ENCODE measurements at regions of chr9 and their contacts with region 1.

Region 1: DNA sequence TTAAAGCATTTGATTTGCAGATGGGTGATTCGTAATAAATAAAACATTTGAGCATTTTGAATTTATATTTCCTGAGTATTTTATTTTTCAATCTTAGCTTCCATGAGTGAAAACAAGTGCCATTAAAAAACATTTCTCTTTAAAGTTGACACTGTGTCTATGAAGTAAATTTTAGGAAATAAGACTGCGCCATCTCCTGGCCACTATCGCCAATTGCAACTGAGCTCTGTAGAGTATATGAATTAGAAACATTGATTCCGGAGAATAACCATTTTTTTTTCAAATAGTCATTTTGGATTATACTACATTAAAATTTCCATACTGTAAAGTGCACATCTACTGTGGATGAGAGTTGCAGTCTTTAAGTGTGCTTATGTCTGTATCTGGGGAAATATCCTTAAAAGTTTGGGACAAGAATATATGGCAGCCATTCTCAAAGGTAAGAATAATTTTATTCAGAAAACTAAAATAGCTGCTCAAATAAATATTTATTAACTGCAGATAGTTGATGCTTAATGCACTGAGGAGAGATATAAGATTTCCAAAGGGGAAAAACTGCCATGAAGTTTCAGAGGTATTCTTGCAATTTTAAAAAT is 5.9 kb downstream of the DMRTA1 start:
- DNase-seq: peak; percentile 60
- H3K4me3 Mint-ChIP-seq: no peak overlapping the region
- H3K27ac Mint-ChIP-seq: no peak overlapping the region
- H3K4me1 Mint-ChIP-seq: peaks cover 6% of the 10 kb centered on the region
- H3K27me3 Mint-ChIP-seq: peaks cover 26% of the 10 kb centered on the region

Region 2: GRCh38 chr9:22216730-22217160 is 235.8 kb before region 1 on chr9:
- CTCF ChIA-PET with region 1: no interaction called
- POLR2A ChIA-PET with region 1: no interaction called
- intact Hi-C with region 1: no loop called
- DNase-seq: no peak
- H3K4me3 Mint-ChIP-seq: no peak overlapping the region
- H3K27ac Mint-ChIP-seq: no peak overlapping the region
- H3K4me1 Mint-ChIP-seq: peaks cover 11% of the 10 kb centered on the region
- H3K27me3 Mint-ChIP-seq: no peaks in the 10 kb centered on the region

Region 3: DNA sequence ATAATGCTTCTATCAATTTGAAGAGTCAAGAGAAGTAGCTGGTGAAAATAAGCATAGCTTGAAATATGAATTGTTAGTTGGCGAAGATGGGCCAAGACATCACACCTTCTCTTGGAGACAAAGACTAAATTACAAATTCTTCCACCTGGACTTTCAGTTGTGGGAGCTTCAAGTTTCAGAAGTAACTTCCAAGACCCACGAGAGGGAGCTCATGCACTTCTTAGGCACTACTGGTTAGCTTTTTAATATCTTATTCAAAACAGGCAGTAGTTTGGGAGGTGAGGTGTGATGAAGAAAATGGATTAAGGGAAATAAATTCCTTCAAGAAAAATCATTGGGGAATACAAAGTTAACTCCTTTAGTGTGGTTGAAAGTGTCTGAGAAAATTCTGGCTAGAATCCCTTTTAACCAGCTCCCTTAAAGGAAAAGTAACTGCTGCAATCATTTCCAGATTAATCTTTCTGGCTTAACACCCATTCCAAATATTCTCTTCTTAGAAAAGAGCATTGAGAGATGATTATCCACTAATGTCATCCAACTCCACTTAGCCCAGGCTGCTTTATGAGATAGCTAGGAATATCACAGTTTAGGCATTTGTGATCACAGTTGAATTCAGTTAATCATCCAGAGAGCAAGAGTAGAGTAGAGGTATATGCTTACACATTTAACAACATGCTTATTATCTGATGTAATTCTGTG is 145.4 kb before region 1 on chr9:
- CTCF ChIA-PET with region 1: interaction called, 28 read pairs
- POLR2A ChIA-PET with region 1: no interaction called
- intact Hi-C with region 1: loop called (anchors 1 kb)
- DNase-seq: no peak
- H3K4me3 Mint-ChIP-seq: no peak overlapping the region
- H3K27ac Mint-ChIP-seq: no peak overlapping the region
- H3K4me1 Mint-ChIP-seq: no peaks in the 10 kb centered on the region
- H3K27me3 Mint-ChIP-seq: peaks cover 9% of the 10 kb centered on the region

Region 4: DNA sequence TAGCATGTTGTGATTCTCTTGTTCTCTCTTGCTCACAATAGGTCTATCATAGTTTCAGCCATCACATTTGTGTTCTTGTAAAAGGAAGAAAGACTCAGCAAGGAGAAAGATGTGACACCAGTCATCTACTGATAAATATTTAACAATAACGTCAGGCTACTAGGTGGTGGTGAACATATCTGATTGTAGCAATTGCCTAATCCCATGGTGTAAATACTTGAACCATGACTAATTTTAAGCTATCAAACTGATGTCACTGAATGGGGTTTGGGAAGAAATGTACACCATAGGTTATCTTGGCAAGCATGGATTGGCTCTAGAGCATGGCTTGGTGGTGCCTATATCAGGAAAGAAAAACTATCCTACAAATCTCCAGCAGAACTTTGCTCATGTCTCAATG is 10.7 kb after region 1 on chr9:
- CTCF ChIA-PET with region 1: interaction called, 11 read pairs
- POLR2A ChIA-PET with region 1: no interaction called
- intact Hi-C with region 1: no loop called
- DNase-seq: no peak
- H3K4me3 Mint-ChIP-seq: no peak overlapping the region
- H3K27ac Mint-ChIP-seq: no peak overlapping the region
- H3K4me1 Mint-ChIP-seq: no peaks in the 10 kb centered on the region
- H3K27me3 Mint-ChIP-seq: peaks cover 12% of the 10 kb centered on the region

Region 5: GRCh38 chr9:22483528-22484070 is 31.1 kb after region 1 on chr9:
- CTCF ChIA-PET with region 1: no interaction called
- POLR2A ChIA-PET with region 1: no interaction called
- intact Hi-C with region 1: no loop called
- DNase-seq: no peak
- H3K4me3 Mint-ChIP-seq: no peak overlapping the region
- H3K27ac Mint-ChIP-seq: no peak overlapping the region
- H3K4me1 Mint-ChIP-seq: no peaks in the 10 kb centered on the region
- H3K27me3 Mint-ChIP-seq: no peaks in the 10 kb centered on the region

Region 6: DNA sequence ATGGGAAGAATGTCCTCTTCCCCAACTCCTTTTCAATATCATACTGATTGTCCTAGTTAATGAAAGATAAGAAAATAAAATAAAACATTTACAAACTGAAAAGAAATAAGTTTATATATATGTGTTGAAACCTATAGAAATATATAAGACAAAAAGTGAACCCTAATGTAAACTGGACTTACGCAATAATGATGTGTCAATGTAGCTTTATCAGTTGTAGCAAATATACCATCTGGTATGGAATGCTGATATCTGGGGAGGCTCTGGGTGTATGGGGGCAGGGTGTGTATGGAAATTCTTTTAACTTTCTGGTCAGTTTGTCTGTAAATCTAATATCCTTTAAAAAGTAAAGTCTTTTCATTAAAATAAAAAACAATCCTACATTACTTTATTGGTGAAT is 598.0 kb after region 1 on chr9:
- CTCF ChIA-PET with region 1: no interaction called
- POLR2A ChIA-PET with region 1: no interaction called
- intact Hi-C with region 1: no loop called
- DNase-seq: no peak
- H3K4me3 Mint-ChIP-seq: no peak overlapping the region
- H3K27ac Mint-ChIP-seq: no peak overlapping the region
- H3K4me1 Mint-ChIP-seq: no peaks in the 10 kb centered on the region
- H3K27me3 Mint-ChIP-seq: no peaks in the 10 kb centered on the region

Region 7: DNA sequence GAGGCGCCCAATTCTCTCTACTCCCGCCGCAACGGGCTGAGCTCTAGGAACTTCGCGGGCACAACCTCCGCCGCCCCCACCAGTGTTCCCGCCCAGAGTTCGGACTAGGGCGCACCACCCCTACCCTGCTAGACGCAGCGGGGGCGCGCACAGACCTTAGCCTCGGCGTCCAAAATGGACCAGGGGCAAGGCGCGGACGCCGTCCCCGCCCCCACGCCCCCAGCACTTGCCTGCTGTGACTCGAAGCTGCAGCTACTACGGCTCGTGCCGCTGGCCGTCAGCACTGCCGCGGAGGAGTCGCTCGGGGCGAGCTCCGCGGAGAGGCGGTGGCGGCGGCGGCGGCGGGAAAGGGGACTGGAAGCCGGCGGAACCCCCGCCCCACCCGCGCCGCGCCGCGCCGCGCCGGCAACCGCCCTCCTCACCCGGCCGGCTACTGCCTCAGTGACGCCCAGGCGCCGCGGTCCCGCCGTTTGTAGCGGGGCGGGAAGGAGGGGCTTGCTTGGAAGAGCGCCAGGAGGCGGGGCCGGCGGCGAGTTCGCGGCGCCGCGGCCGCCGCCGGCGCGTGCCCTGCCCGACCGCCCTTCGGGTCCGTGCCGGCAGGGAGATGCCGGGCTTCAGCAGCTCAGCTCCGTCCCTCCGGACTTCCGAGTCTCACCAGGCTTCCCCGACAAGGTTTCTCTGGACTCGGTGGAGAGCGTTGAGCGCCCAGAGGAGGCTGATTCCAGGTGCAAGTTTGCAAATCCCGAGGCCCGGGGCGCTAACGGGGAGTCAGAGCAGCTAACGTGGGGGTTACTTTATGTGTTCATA is 1369.1 kb after region 1 on chr9:
- CTCF ChIA-PET with region 1: no interaction called
- POLR2A ChIA-PET with region 1: no interaction called
- intact Hi-C with region 1: no loop called
- DNase-seq: no peak
- H3K4me3 Mint-ChIP-seq: no peak overlapping the region
- H3K27ac Mint-ChIP-seq: no peak overlapping the region
- H3K4me1 Mint-ChIP-seq: no peaks in the 10 kb centered on the region
- H3K27me3 Mint-ChIP-seq: peaks cover 42% of the 10 kb centered on the region

Measured in activated CD4-positive, alpha-beta memory T cell treated with anti-CD3 and anti-CD28 coated beads for 36 hours (primary cell).